Esophagus muscularis mucosa (tissue), 4 donors: ENCODE measurements at regions of chr16 and their contacts with region 1.

Region 1: GRCh38 chr16:4614571-4615383 is at the start of gene UBALD1:
- DNase-seq: peak; percentile 95
- H3K4me3 ChIP-seq: peak within 1 kb of the TSS; percentile 89 to 99 (median 97)
- H3K27ac ChIP-seq: peak within 1 kb of the TSS; percentile 94 to 99 (median 98)
- H3K4me1 ChIP-seq: peaks cover 56 to 84% (median 79%) of the 10 kb centered on the region in 4 donors
- H3K27me3 ChIP-seq: no peaks in the 10 kb centered on the region
- CTCF ChIP-seq: no peak
- EP300 ChIP-seq: no peak
- POLR2A ChIP-seq: peak; percentile 93
- total RNA-seq, gene UBALD1: 11.2 to 34.6 (median 17.9) TPM

Region 2: DNA sequence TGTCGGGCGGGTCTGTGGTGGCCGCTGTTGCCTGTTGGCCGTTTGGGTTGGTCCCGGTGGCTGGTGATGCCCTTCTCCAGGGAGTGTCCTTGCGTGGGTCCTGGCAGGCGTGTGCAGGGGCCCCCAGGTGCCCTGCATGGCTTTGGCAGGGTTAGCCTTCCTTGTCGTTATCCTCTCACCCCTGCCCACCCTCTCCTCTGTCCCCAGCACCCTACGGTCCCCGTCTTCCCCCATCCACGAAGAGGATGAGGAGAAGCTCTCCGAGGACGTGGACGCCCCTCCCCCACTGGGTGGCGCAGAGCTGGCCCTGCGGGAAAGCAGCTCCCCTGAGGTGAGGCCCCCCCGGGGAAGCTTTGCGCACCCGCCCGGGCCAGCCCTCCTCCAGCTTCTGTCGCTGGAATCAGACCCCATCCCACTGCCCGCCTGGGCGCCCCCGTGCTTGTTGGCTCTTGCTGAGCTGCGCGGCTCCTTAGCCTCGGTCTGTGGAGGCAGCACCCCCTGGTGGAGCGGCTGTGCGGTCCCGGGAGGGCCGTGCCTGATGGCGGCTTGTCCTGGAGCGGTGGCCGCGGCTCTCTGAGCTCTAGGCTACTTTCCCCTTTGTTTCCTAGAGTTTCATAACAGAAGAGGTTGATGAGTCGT is 68.0 kb after region 1 on chr16:
- intact Hi-C with region 1: loop called (anchors 5 kb)
- DNase-seq: no peak
- H3K4me3 ChIP-seq: peak overlapping the region in 2 of 4 donors; percentile 22 to 32
- H3K27ac ChIP-seq: peak overlapping the region; percentile 20 to 64 (median 52)
- H3K4me1 ChIP-seq: peaks cover 18 to 49% (median 37%) of the 10 kb centered on the region in 4 donors
- H3K27me3 ChIP-seq: no peaks in the 10 kb centered on the region
- CTCF ChIP-seq: peak; percentile 23 to 66 (median 31)
- EP300 ChIP-seq: no peak
- POLR2A ChIP-seq: no peak